ENCODE measurements at regions of chr19 and their contacts with region 1.

Region 1: GRCh38 chr19:42219812-42220750 is at the start of gene ZNF526:
- DNase-seq: peak; percentile 95
- ATAC-seq: peak; percentile 93
- H3K4me3 ChIP-seq: peak within 1 kb of the TSS; percentile 97
- H3K27ac ChIP-seq: peak within 1 kb of the TSS; percentile 83
- H3K4me1 ChIP-seq: peaks cover 18% of the 10 kb centered on the region
- H3K27me3 ChIP-seq: no peaks in the 10 kb centered on the region
- CTCF ChIP-seq: no peak
- EP300 ChIP-seq: no peak
- POLR2A ChIP-seq: peak; percentile 91
- RAD21 ChIP-seq: no peak
- polyA plus RNA-seq, gene ZNF526: 1.8 to 2.0 TPM

Region 2: GRCh38 chr19:40974633-40975037 is 1245.4 kb before region 1 on chr19:
- CTCF ChIA-PET with region 1: no interaction called
- POLR2A ChIA-PET with region 1: no interaction called
- RAD21 ChIA-PET with region 1: no interaction called
- SMC1A ChIA-PET with region 1: no interaction called
- in situ Hi-C with region 1: no loop called
- intact Hi-C with region 1: no loop called
- DNase-seq: peak; percentile 3
- ATAC-seq: peak; percentile 89
- H3K4me3 ChIP-seq: no peak overlapping the region
- H3K27ac ChIP-seq: no peak overlapping the region
- H3K4me1 ChIP-seq: no peaks in the 10 kb centered on the region
- H3K27me3 ChIP-seq: no peaks in the 10 kb centered on the region
- CTCF ChIP-seq: peak; percentile 64 to 74 (median 73)
- EP300 ChIP-seq: no peak
- POLR2A ChIP-seq: no peak
- RAD21 ChIP-seq: peak; percentile 57

Region 3: GRCh38 chr19:42199440-42200115 is 20.5 kb before region 1 on chr19:
- CTCF ChIA-PET with region 1: interaction called, 8 read pairs
- POLR2A ChIA-PET with region 1: interaction called, 22 read pairs
- RAD21 ChIA-PET with region 1: interaction called, 9 read pairs
- SMC1A ChIA-PET with region 1: interaction called, 19 read pairs
- in situ Hi-C with region 1: no loop called
- intact Hi-C with region 1: loop called (anchors 2 kb)
- DNase-seq: peak; percentile 68
- ATAC-seq: peak; percentile 77
- H3K4me3 ChIP-seq: peak overlapping the region; percentile 41
- H3K27ac ChIP-seq: peak overlapping the region; percentile 95
- H3K4me1 ChIP-seq: peaks cover 59% of the 10 kb centered on the region
- H3K27me3 ChIP-seq: no peaks in the 10 kb centered on the region
- CTCF ChIP-seq: peak; percentile 55 to 67 (median 61)
- EP300 ChIP-seq: no peak
- POLR2A ChIP-seq: peak; percentile 74
- RAD21 ChIP-seq: peak; percentile 40

Region 4: GRCh38 chr19:42290523-42291438 is 70.7 kb after region 1 on chr19:
- CTCF ChIA-PET with region 1: no interaction called
- POLR2A ChIA-PET with region 1: no interaction called
- RAD21 ChIA-PET with region 1: no interaction called
- SMC1A ChIA-PET with region 1: no interaction called
- in situ Hi-C with region 1: no loop called
- intact Hi-C with region 1: no loop called
- DNase-seq: no peak
- ATAC-seq: peak; percentile 90
- H3K4me3 ChIP-seq: no peak overlapping the region
- H3K27ac ChIP-seq: no peak overlapping the region
- H3K4me1 ChIP-seq: peaks cover 6% of the 10 kb centered on the region
- H3K27me3 ChIP-seq: no peaks in the 10 kb centered on the region
- CTCF ChIP-seq: peak; percentile 49 to 73 (median 63)
- EP300 ChIP-seq: no peak
- POLR2A ChIP-seq: 0 out of 2 replicates have a peak, but pooled peaks have one; percentile 42
- RAD21 ChIP-seq: peak; percentile 35

Measured in GM12878 (cell line).